CD4-positive, alpha-beta T cell (primary cell): ENCODE measurements at regions of chr9 and their contacts with region 1.

Region 1: GRCh38 chr9:114339130-114339908 is 9.7 kb downstream of the ORM2 start:
- DNase-seq: peak; percentile 23 to 75 (median 44)
- ATAC-seq: peak; percentile 67
- H3K4me3 ChIP-seq: no peak overlapping the region
- H3K4me3 Mint-ChIP-seq: no peak overlapping the region
- H3K27ac ChIP-seq: peak overlapping the region in 1 of 2 donors; percentile 40
- H3K27ac Mint-ChIP-seq: peak overlapping the region; percentile 62
- H3K4me1 ChIP-seq: peaks cover 11% of the 10 kb centered on the region
- H3K4me1 Mint-ChIP-seq: peaks cover 16% of the 10 kb centered on the region
- H3K27me3 ChIP-seq: no peaks in the 10 kb centered on the region
- H3K27me3 Mint-ChIP-seq: no peaks in the 10 kb centered on the region
- CTCF ChIP-seq: peak; percentile 89

Region 2: DNA sequence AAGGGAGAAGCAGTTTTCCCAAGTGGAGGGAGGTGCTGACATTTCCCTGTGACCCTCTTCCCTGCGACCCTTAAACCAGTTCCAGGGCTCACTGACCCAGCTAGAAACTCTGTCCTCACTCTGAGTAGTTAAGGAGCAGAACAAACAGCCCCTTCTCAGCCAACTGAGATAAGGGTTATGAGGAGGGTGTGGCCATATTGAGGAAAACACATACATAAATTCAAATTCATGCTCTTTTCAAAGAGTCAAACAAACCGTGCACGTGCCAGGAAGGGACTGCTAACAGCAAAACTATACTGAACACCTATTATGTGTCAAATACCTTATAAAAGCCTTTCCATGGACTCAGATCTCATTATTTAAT is 53.4 kb after region 1 on chr9:
- CTCF ChIA-PET with region 1: interaction called, 3 read pairs
- POLR2A ChIA-PET with region 1: interaction called, 10 read pairs
- intact Hi-C with region 1: loop called in 1 of 2 experiments (anchors 2 kb)
- DNase-seq: no peak
- ATAC-seq: no peak
- H3K4me3 ChIP-seq: no peak overlapping the region
- H3K4me3 Mint-ChIP-seq: peak overlapping the region; percentile 61
- H3K27ac ChIP-seq: peak overlapping the region in 1 of 2 donors; percentile 37
- H3K27ac Mint-ChIP-seq: peak overlapping the region; percentile 98
- H3K4me1 ChIP-seq: peaks cover 99% of the 10 kb centered on the region
- H3K4me1 Mint-ChIP-seq: peaks cover 93% of the 10 kb centered on the region
- H3K27me3 ChIP-seq: no peaks in the 10 kb centered on the region
- H3K27me3 Mint-ChIP-seq: no peaks in the 10 kb centered on the region
- CTCF ChIP-seq: no peak

Region 3: DNA sequence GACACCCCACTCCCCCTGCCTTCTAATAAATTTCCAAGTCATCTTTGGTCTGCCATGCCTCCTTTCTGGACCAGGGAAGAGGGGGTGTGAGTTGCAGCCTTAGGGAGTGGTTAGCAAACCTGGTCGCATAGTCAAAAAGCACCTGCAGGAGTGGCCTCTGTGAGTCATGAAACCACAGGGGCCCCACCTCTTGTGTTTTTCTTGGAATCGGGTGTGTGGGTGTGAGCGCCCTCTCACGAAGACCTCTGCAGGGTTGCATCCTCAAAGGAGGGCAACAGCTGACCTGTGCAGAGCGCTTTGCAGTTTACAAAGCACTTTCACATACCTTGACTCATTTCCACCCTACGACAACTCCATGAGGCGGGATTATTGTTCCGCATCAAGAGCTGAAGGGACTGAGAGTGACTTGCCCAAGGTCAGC is 379.5 kb after region 1 on chr9:
- CTCF ChIA-PET with region 1: no interaction called
- POLR2A ChIA-PET with region 1: no interaction called
- intact Hi-C with region 1: no loop called
- DNase-seq: peak; percentile 28 to 91 (median 72)
- ATAC-seq: peak; percentile 88
- H3K4me3 ChIP-seq: no peak overlapping the region
- H3K4me3 Mint-ChIP-seq: peak overlapping the region; percentile 39
- H3K27ac ChIP-seq: peak overlapping the region in 1 of 2 donors; percentile 43
- H3K27ac Mint-ChIP-seq: peak overlapping the region; percentile 84
- H3K4me1 ChIP-seq: peaks cover 35% of the 10 kb centered on the region
- H3K4me1 Mint-ChIP-seq: peaks cover 35% of the 10 kb centered on the region
- H3K27me3 ChIP-seq: no peaks in the 10 kb centered on the region
- H3K27me3 Mint-ChIP-seq: no peaks in the 10 kb centered on the region
- CTCF ChIP-seq: no peak